Left cardiac atrium (tissue), 4 donors: ENCODE measurements at regions of chr22 and their contacts with region 1.

Region 1: DNA sequence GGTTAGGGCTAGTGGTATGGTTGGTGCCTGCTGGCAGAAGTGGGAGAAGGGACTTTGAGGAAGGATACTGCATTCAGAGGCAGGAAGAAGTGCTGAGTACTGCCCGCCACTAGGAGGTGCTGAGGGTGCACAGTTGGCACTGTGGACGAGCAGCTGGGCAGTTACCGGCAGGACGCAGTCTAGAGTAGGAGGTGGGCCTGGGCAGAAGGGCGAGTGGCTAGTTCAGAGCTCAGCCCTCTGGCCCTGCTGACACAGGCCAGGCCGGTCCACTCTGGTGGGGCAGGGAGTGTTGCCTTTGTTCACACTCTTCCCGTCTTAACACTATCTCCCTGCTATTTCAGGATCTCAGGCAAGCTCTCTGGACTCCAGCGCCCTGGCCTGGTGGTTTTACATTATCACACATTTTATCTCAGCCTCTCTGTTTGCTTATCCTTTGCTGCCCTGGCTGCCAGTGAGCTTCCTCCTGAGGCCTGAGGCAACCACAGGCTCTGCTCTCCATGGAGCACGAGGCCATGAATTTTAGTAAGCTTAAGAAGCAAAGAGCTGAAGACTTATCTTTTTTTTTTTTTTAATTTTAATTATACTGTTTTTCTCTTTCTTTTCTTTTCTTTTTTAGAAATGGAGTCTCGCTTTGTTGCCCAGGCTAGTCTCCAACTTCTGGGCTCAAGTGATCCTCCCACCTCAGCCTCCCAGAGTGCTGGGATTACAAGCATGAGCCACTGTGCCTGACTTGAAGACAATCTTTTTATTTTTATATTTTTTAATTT is 26.9 kb downstream of the SNAP29 start:
- DNase-seq: peak; percentile 86
- ATAC-seq: peak; percentile 96 to 97

Region 2: GRCh38 chr22:20803696-20804324 is 81.9 kb before region 1 on chr22:
- intact Hi-C with region 1: loop called in 1 of 2 experiments (anchors 10 kb)
- DNase-seq: no peak
- ATAC-seq: peak; percentile 52 to 63

Region 3: DNA sequence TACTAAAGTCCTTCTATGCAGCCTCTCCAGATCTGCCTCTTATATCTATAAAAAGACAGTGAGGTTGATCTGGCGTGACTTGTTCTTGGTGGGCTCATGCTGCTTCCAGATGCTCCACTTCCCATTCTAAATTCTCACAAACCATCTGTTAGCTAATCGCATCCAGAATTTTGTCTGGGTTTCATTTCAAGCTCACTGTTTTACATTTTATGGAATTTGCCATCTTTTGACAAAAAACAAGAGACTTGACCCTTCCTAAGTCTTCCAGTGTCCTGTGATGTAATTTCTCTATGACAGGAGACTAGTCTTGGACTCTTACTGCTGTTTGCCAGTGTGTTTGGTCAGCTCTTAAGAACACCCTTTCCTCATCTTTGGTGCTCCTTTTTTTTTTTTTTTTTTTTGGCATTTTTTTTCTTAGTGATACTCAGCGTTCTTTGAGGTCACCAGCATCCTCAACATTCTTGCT is 54.5 kb after region 1 on chr22:
- intact Hi-C with region 1: no loop called
- DNase-seq: no peak
- ATAC-seq: no peak